Endothelial cell of umbilical vein (primary cell): ENCODE measurements at regions of chr19 and their contacts with region 1.

Region 1: DNA sequence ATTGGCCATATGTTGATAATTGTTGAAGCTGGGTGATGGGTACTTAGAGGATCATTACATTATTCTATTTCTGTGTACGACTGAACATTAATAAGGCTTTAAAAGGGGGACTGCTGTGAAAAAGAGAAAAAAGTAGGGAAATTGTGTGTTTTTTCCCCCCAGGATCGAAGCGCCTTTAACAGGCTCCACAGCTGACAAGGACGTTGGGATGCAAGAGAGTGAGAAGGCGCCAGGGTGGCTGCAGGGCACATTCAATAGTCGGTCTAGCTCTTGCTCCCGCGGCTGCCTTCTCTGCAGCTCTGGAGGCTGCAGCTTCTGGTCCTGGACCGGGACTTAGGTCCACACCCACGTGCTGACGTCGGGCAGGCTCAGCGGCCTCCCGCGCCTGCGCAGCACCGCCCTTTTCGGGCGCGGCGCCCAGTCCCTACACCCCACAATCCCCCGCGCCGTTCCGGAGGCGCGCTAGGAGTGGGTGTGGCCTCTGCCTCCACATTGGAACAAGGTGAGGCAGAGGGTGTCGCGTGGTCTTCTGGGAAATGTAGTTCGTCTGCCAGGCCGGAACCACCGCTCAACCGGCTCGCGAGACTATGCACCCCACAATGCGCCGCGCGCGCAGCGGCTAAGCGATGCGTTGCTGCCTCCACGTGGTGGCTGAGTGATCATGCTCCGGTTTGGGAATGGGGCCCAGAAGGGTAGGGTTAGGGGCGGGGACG is 4.9 kb upstream of the LRFN3 start:
- DNase-seq: peak; percentile 100
- H3K4me3 ChIP-seq: peak overlapping the region in 1 of 3 experiments; percentile 37
- H3K27ac ChIP-seq: no peak overlapping the region
- H3K4me1 ChIP-seq: peaks cover 11% of the 10 kb centered on the region
- H3K27me3 ChIP-seq: no peaks in the 10 kb centered on the region
- CTCF ChIP-seq: peak; percentile 88
- POLR2A ChIP-seq: peak; percentile 98

Region 2: DNA sequence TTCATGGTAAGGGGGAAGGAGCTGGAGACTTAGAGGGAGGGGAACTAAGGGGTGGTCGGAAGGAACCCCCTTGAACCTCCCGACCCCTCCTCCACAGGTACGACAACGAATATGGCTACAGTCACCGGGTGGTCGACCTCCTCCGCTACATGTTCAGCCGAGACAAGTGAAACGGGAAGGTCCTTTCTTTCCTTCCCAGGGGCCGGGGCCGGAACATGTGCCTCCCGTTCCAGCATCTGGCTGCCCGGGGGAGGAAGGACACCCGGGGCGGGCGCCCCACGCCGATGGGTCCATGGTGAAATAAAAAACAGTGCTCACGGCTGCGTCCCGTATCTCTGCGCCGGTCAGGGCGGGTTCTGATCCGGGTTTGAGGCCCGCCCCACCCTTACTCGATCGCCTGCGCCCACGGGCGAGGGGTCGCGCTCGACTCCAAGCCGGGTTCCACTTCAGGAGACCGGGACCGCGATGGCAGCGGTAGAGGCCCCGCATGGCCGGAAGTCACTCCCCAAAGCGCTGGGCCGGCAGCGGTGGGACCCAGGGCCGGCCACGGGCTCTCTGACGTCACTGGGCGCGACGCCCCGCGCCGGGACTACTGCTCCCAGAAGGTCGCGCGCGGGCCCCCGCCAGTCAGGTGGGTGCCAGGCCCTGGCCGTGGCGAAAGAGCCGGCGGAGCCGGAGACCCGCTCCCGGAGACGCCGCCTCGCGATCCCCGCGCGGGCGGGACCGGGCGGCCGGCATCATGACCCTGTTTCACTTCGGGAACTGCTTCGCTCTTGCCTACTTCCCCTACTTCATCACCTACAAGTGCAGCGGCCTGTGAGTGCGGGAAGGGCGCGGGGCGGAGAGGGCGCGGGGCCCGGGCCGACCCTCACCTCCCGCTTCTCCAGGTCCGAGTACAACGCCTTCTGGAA is 386.1 kb before region 1 on chr19 and contains the start of gene TMEM147:
- CTCF ChIA-PET with region 1: no interaction called
- POLR2A ChIA-PET with region 1: no interaction called
- dilution Hi-C with region 1: no loop called
- intact Hi-C with region 1: loop called (anchors 1 kb)
- DNase-seq: peak; percentile 82
- H3K4me3 ChIP-seq: peak within 1 kb of the TSS; percentile 77 to 88 (median 88)
- H3K27ac ChIP-seq: peak within 1 kb of the TSS; percentile 79
- H3K4me1 ChIP-seq: peaks cover 16% of the 10 kb centered on the region
- H3K27me3 ChIP-seq: no peaks in the 10 kb centered on the region
- CTCF ChIP-seq: no peak
- POLR2A ChIP-seq: peak; percentile 87
- total RNA-seq, gene TMEM147: 75.8 and 76.1 TPM in 2 replicates

Region 3: DNA sequence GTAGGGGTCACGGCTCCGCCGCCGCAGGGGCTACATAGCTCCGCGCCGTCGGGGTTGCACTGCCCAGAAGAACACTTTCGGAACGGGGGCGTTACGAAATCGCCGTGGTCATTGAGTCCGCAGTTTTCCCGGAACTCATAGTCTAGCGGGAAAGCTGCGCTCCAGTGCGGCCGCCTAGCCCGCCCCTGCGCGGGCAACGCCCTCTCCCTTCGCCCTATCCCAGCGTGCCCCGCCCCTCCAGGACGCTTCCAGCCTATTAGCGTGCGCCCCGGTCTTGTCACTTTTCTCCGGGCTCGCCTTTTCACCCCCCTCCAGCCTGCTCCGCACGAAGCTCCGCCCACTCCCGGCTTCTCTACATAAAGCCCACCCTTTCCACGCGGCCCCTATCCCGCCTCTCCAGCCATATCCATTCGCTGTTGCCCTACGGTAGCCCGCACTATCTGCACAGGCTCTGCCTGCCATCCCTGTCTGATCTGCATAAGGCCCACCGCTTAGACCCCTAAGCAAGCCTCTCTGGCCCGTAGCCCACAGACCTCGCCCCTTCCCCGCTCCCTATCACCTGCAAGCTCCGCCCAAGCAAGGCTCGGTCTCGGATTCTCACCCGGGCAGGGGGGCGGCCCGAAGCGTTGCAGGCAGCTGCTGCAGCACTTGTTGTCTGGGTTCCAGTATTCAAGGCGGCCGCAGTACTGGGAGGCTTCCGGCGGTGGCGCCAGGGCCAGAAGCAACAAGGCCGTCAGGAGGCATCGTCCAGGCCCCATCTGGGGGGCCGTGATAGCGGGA is 190.7 kb before region 1 on chr19:
- CTCF ChIA-PET with region 1: interaction called, 3 read pairs
- POLR2A ChIA-PET with region 1: interaction called, 4 read pairs
- dilution Hi-C with region 1: no loop called
- intact Hi-C with region 1: loop called (anchors 1 kb)
- DNase-seq: peak; percentile 97
- H3K4me3 ChIP-seq: peak overlapping the region; percentile 50 to 78 (median 62)
- H3K27ac ChIP-seq: peak overlapping the region; percentile 64
- H3K4me1 ChIP-seq: peaks cover 14% of the 10 kb centered on the region
- H3K27me3 ChIP-seq: no peaks in the 10 kb centered on the region
- CTCF ChIP-seq: no peak
- POLR2A ChIP-seq: peak; percentile 72

Region 4: GRCh38 chr19:35775298-35776110 is 155.8 kb before region 1 on chr19 and contains the start of gene ARHGAP33:
- CTCF ChIA-PET with region 1: no interaction called
- POLR2A ChIA-PET with region 1: no interaction called
- dilution Hi-C with region 1: no loop called
- intact Hi-C with region 1: loop called (anchors 1 kb)
- DNase-seq: peak; percentile 97
- H3K4me3 ChIP-seq: peak within 1 kb of the TSS; percentile 46 to 63 (median 57)
- H3K27ac ChIP-seq: no peak within 1 kb of the TSS
- H3K4me1 ChIP-seq: peaks cover 4% of the 10 kb centered on the region
- H3K27me3 ChIP-seq: no peaks in the 10 kb centered on the region
- CTCF ChIP-seq: no peak
- POLR2A ChIP-seq: no peak
- total RNA-seq, gene ARHGAP33: 18.4 and 32.8 TPM in 2 replicates

Region 5: GRCh38 chr19:35882114-35882832 is 49.0 kb before region 1 on chr19:
- CTCF ChIA-PET with region 1: interaction called, 38 read pairs
- POLR2A ChIA-PET with region 1: interaction called, 6 read pairs
- dilution Hi-C with region 1: no loop called
- intact Hi-C with region 1: loop called (anchors 1 kb)
- DNase-seq: peak; percentile 77
- H3K4me3 ChIP-seq: no peak overlapping the region
- H3K27ac ChIP-seq: no peak overlapping the region
- H3K4me1 ChIP-seq: no peaks in the 10 kb centered on the region
- H3K27me3 ChIP-seq: no peaks in the 10 kb centered on the region
- CTCF ChIP-seq: peak; percentile 15 to 34
- POLR2A ChIP-seq: no peak

Region 6: GRCh38 chr19:35908973-35909683 is 22.2 kb before region 1 on chr19:
- CTCF ChIA-PET with region 1: no interaction called
- POLR2A ChIA-PET with region 1: no interaction called
- dilution Hi-C with region 1: no loop called
- intact Hi-C with region 1: no loop called
- DNase-seq: no peak
- H3K4me3 ChIP-seq: no peak overlapping the region
- H3K27ac ChIP-seq: no peak overlapping the region
- H3K4me1 ChIP-seq: no peaks in the 10 kb centered on the region
- H3K27me3 ChIP-seq: no peaks in the 10 kb centered on the region
- CTCF ChIP-seq: no peak
- POLR2A ChIP-seq: no peak

Region 7: DNA sequence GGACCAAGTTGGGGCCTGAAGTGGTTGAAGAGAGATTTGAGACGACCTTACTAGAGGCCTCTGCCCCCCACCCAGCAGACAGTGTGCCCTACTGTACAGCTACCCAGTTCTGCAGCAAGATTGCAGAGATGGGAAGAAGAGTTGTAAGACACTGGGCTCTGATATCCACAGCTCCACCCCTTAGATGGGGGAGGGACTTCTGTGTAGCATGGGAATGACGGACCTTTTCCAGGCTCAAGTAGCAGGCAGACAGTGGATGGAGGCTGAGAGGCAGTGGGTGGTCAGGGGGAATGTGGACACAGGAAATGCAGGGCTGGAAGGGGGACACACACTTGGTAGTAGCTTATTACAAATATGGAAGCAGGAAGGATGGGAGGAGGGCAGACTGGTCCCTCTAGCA is 17.8 kb after region 1 on chr19:
- CTCF ChIA-PET with region 1: no interaction called
- POLR2A ChIA-PET with region 1: no interaction called
- dilution Hi-C with region 1: no loop called
- intact Hi-C with region 1: no loop called
- DNase-seq: no peak
- H3K4me3 ChIP-seq: no peak overlapping the region
- H3K27ac ChIP-seq: no peak overlapping the region
- H3K4me1 ChIP-seq: peaks cover 2% of the 10 kb centered on the region
- H3K27me3 ChIP-seq: no peaks in the 10 kb centered on the region
- CTCF ChIP-seq: no peak
- POLR2A ChIP-seq: no peak

Region 8: DNA sequence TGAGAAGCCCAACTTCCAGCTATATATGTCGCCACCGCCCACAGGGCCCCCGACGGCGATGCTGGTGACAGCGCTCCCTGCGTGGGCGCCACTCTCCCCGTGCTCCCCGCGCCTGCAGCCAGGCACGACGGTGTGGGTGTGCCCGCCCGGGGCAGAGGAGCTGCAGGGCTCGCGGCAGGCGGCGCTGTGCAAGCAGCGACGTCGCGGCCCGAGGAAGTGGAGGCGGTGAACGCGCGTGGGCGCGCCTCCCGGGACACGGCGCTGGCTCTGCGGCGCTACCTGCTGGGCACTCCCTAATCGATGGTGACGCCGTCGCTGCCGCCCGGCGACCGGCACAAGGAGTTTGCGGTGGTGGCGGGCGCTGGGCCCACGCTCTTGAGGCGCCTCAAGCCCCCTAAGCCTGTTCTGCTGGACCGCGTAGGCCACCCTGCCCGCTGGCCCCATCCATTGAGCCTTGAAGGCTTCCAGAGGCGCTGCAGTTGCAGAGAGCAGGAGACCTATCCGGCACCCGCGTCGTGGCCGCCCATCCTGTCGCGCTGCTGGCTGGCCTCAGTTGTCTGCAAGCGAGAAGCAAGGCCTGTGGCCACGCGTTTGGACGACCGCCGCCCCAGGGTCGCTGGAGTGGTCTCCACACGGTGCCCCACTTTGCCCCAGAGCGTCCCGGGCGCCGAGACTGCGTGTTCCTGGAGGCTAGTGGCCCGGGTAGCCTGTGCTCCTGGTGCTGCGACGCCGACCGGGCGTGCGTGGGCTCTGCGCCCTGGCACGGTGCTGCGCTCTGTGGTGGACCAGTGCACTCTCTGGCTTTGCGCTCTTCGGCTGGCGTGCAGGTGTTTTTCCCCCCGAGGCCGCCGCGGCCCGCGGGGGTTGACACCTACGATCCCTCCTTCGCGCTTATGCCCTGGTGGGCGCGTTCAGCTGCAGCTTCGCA is 28.0 kb after region 1 on chr19:
- CTCF ChIA-PET with region 1: no interaction called
- POLR2A ChIA-PET with region 1: no interaction called
- dilution Hi-C with region 1: no loop called
- intact Hi-C with region 1: no loop called
- DNase-seq: no peak
- H3K4me3 ChIP-seq: no peak overlapping the region
- H3K27ac ChIP-seq: no peak overlapping the region
- H3K4me1 ChIP-seq: no peaks in the 10 kb centered on the region
- H3K27me3 ChIP-seq: peaks cover 21 to 27% of the 10 kb centered on the region in 2 experiments
- CTCF ChIP-seq: peak; percentile 4 to 25
- POLR2A ChIP-seq: no peak

Region 9: DNA sequence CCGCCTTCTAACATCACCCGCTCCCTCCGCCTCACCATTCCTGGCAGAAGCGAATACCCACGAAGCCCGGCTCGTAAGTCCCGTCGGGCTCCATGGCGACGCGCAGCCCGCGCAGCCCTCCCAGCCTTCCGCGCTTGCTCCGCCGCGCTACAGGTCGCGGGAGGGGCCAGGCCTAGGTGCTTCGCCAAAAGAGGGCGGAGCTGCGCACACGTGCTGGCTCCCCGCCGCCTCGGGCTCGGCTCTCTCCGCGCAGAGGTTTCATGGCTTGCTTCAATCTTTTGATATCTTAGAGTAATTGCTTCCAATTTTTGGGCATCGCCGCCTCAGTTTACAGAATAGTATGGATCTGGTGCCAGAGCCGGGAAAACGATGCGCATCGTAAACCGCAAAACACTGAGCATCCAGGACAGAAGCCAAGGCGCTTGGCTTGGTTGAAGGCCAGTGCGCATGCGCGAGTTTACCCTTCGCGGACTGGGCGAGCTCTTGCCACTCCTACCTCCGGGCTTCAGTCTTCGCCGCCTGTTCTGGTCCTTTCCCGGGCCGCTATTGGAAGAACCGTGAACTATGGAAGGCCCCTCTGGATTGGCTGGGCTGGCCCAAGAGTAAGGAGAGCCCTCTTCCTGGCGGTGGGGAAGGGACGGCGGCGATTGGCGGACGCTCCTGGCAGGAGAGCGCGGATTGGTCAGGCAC is 183.6 kb after region 1 on chr19 and contains the start of gene POLR2I:
- CTCF ChIA-PET with region 1: no interaction called
- POLR2A ChIA-PET with region 1: no interaction called
- dilution Hi-C with region 1: no loop called
- intact Hi-C with region 1: loop called (anchors 1 kb)
- DNase-seq: peak; percentile 100
- H3K4me3 ChIP-seq: peak within 1 kb of the TSS; percentile 68 to 81 (median 79)
- H3K27ac ChIP-seq: peak within 1 kb of the TSS; percentile 68
- H3K4me1 ChIP-seq: peaks cover 15% of the 10 kb centered on the region
- H3K27me3 ChIP-seq: no peaks in the 10 kb centered on the region
- CTCF ChIP-seq: no peak
- POLR2A ChIP-seq: peak; percentile 59
- total RNA-seq, gene POLR2I: 63.3 and 64.8 TPM in 2 replicates